Activated CD4-positive, alpha-beta T cell treated with anti-CD3 and anti-CD28 coated beads for 36 hours (primary cell): ENCODE measurements at regions of chrX and their contacts with region 1.

Region 1: DNA sequence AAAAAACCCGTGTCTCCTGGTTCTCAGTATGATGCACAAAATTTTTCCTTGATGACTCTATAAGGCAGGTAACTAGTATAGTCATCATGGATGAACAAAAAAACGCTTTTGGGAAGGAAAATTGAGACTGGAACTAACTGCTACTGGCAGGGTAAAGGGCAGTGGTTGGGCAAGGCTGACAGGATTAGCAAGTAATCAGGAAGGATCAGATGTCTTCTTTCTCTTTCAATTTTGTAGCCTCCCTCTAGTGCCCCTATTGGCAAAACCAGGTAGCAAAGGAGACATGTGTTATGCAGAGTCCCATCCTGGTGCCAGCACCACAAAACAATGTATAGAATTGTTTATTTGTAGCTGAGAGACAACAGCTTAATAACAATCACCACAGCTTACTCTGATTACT is 12.8 kb upstream of the SLITRK4 start:
- DNase-seq: no peak
- ATAC-seq: no peak
- H3K4me3 Mint-ChIP-seq: no peak overlapping the region
- H3K27ac Mint-ChIP-seq: no peak overlapping the region
- H3K4me1 Mint-ChIP-seq: no peaks in the 10 kb centered on the region
- H3K27me3 Mint-ChIP-seq: no peaks in the 10 kb centered on the region

Region 2: DNA sequence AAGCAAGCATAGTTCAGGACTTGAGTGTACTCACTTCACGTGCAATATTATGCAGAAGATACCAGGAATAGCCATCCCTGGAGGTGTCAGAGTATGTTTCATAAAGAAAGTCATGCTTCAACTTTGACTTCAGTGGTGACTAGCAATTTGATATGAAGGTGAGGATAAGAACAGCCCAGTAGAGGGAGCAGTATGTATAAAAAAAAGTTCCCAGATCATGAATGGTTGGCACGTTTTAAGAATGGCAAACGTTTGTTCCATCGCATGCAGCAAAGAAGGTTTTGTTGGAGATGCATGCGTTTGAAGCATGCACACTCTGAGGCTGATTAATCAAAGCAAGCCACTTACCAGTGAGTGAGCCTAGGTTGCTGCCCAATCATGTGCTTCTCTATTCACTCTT is 20.7 kb after region 1 on chrX:
- CTCF ChIA-PET with region 1: no interaction called
- POLR2A ChIA-PET with region 1: no interaction called
- intact Hi-C with region 1: no loop called
- DNase-seq: no peak
- ATAC-seq: no peak
- H3K4me3 Mint-ChIP-seq: no peak overlapping the region
- H3K27ac Mint-ChIP-seq: no peak overlapping the region
- H3K4me1 Mint-ChIP-seq: no peaks in the 10 kb centered on the region
- H3K27me3 Mint-ChIP-seq: no peaks in the 10 kb centered on the region

Region 3: DNA sequence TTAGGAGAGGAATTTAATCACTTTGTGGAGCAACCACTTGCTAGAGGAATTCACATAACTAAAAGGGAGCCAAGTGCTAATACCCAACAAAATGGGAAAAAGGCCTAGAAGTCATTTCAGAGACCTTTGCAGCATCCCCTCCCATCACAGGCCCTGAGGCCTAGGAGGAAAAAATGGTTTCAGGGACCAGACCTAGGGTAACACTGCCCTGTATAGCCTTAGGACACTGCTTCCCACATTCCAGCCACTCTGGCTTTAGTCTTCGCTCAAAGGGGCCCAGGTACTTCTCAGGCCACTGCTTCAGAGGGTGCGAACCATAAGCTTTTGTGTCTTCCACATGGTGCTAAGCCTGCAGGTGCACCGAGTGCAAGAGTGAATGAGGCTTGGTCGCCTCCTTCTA is 52.8 kb after region 1 on chrX:
- CTCF ChIA-PET with region 1: no interaction called
- POLR2A ChIA-PET with region 1: no interaction called
- intact Hi-C with region 1: loop called in 1 of 2 experiments (anchors 10 kb)
- DNase-seq: no peak
- ATAC-seq: no peak
- H3K4me3 Mint-ChIP-seq: no peak overlapping the region
- H3K27ac Mint-ChIP-seq: no peak overlapping the region
- H3K4me1 Mint-ChIP-seq: no peaks in the 10 kb centered on the region
- H3K27me3 Mint-ChIP-seq: no peaks in the 10 kb centered on the region